ENCODE measurements at regions of chr22 and their contacts with region 1.

Region 1: GRCh38 chr22:36065775-36066559 is 37.3 kb upstream of the RBFOX2 start:
- DNase-seq: peak; percentile 94
- ATAC-seq: peak; percentile 92
- H3K4me3 Mint-ChIP-seq: peak overlapping the region; percentile 84
- H3K27ac Mint-ChIP-seq: peak overlapping the region; percentile 87
- H3K4me1 Mint-ChIP-seq: peaks cover 7% of the 10 kb centered on the region; the same call in 1 of the 2 replicates
- H3K27me3 Mint-ChIP-seq: no peaks in the 10 kb centered on the region; the same call in 1 of the 2 replicates
- CTCF ChIP-seq: peak; percentile 100

Region 2: GRCh38 chr22:35627264-35628041 is 438.5 kb before region 1 on chr22:
- CTCF ChIA-PET with region 1: interaction called, 13 read pairs
- POLR2A ChIA-PET with region 1: no interaction called
- DNase-seq: peak; percentile 70
- ATAC-seq: peak; percentile 58
- H3K4me3 Mint-ChIP-seq: peak overlapping the region; percentile 80
- H3K27ac Mint-ChIP-seq: peak overlapping the region; percentile 20
- H3K4me1 Mint-ChIP-seq: peaks cover 28% of the 10 kb centered on the region
- H3K27me3 Mint-ChIP-seq: peaks cover 3% of the 10 kb centered on the region; the same call in 1 of the 2 replicates
- CTCF ChIP-seq: no peak

Region 3: GRCh38 chr22:35921777-35922176 is 144.2 kb before region 1 on chr22:
- CTCF ChIA-PET with region 1: interaction called, 16 read pairs
- POLR2A ChIA-PET with region 1: no interaction called
- DNase-seq: peak; percentile 39
- ATAC-seq: peak; percentile 99
- H3K4me3 Mint-ChIP-seq: no peak overlapping the region
- H3K27ac Mint-ChIP-seq: peak overlapping the region; percentile 28; the same call in 1 of the 2 replicates
- H3K4me1 Mint-ChIP-seq: peaks cover 27% of the 10 kb centered on the region
- H3K27me3 Mint-ChIP-seq: no peaks in the 10 kb centered on the region
- CTCF ChIP-seq: peak; percentile 31; the same call in 1 of the 2 replicates

Region 4: GRCh38 chr22:35986088-35986487 is 79.9 kb before region 1 on chr22:
- CTCF ChIA-PET with region 1: interaction called, 11 read pairs
- POLR2A ChIA-PET with region 1: no interaction called
- DNase-seq: no peak
- ATAC-seq: no peak
- H3K4me3 Mint-ChIP-seq: no peak overlapping the region
- H3K27ac Mint-ChIP-seq: peak overlapping the region; percentile 71
- H3K4me1 Mint-ChIP-seq: peaks cover 50% of the 10 kb centered on the region
- H3K27me3 Mint-ChIP-seq: no peaks in the 10 kb centered on the region
- CTCF ChIP-seq: no peak

Region 5: DNA sequence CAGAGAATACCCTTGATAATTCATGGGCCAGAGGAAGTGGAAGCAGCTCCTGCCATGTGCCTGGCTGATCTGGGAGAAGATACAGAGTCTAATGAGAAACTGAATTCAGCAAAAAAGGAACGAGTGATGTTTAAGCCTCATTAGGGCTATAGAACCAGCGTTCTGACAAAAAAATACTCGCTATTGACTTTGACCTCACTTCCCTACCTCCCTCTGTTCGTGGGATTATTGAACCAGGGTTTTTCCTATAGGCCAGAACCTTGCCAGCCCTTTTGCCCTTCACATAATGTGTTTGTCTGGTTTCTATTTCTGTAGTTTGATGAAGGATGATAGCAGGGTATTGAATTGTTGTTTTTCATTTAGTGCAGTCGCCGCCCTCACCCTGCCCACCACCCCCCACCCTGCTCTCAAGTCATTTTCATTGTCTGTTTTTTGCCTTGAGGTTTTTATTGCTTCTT is 29.8 kb before region 1 on chr22:
- CTCF ChIA-PET with region 1: interaction called, 27 read pairs
- POLR2A ChIA-PET with region 1: no interaction called
- DNase-seq: no peak
- ATAC-seq: no peak; the same call in 1 of the 2 replicates
- H3K4me3 Mint-ChIP-seq: no peak overlapping the region
- H3K27ac Mint-ChIP-seq: no peak overlapping the region
- H3K4me1 Mint-ChIP-seq: peaks cover 24% of the 10 kb centered on the region
- H3K27me3 Mint-ChIP-seq: peaks cover 7% of the 10 kb centered on the region
- CTCF ChIP-seq: no peak

Region 6: DNA sequence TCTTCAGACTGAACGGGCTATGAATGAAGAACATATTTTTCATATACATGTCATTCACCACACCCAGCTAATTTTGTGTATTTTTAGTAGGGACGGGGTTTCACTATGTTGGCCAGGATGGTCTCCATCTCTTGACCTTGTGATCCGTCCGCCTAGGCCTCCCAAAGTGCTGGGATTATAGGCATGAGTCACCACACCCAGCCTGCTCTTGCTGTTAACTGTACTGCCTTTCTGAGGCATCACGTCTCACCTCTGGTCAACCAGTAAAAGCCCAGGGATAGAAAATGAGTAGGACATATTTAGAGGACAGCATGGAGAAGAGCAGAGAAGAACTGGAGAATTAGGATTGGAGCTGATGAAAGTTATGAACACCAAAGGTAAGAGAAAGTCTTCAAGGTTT is 39.0 kb after region 1 on chr22:
- CTCF ChIA-PET with region 1: interaction called, 23 read pairs
- POLR2A ChIA-PET with region 1: no interaction called
- DNase-seq: no peak
- ATAC-seq: no peak
- H3K4me3 Mint-ChIP-seq: no peak overlapping the region
- H3K27ac Mint-ChIP-seq: no peak overlapping the region
- H3K4me1 Mint-ChIP-seq: no peaks in the 10 kb centered on the region; the same call in none of the 2 replicates
- H3K27me3 Mint-ChIP-seq: no peaks in the 10 kb centered on the region
- CTCF ChIP-seq: no peak

Measured in WTC11 (cell line).